PC-9 (cell line): ENCODE measurements at regions of chr2 and their contacts with region 1.

Region 1: DNA sequence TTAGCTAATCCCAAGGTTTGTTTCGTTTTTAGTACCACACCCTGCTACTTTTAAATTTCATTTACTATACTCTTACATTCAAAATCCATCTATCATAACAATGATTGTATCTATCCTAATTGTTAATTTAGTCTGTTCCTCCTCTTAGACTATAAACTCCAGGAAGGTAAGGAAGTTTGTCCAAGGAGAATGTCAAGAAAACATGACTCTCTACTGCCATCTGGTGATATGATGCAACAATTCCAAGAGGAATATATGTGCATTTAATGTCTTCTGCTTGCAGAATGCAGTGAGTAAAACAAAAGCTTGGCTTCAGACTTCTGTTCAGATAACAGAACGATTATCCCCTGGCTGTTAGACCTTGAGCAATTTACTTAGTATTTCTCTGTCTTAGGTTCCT is 1267.1 kb downstream of the LRP1B start:
- DNase-seq: no peak
- H3K4me3 ChIP-seq: no peak overlapping the region
- H3K27ac ChIP-seq: no peak overlapping the region
- H3K4me1 ChIP-seq: no peaks in the 10 kb centered on the region
- H3K27me3 ChIP-seq: no peaks in the 10 kb centered on the region
- CTCF ChIP-seq: peak; percentile 50

Region 2: DNA sequence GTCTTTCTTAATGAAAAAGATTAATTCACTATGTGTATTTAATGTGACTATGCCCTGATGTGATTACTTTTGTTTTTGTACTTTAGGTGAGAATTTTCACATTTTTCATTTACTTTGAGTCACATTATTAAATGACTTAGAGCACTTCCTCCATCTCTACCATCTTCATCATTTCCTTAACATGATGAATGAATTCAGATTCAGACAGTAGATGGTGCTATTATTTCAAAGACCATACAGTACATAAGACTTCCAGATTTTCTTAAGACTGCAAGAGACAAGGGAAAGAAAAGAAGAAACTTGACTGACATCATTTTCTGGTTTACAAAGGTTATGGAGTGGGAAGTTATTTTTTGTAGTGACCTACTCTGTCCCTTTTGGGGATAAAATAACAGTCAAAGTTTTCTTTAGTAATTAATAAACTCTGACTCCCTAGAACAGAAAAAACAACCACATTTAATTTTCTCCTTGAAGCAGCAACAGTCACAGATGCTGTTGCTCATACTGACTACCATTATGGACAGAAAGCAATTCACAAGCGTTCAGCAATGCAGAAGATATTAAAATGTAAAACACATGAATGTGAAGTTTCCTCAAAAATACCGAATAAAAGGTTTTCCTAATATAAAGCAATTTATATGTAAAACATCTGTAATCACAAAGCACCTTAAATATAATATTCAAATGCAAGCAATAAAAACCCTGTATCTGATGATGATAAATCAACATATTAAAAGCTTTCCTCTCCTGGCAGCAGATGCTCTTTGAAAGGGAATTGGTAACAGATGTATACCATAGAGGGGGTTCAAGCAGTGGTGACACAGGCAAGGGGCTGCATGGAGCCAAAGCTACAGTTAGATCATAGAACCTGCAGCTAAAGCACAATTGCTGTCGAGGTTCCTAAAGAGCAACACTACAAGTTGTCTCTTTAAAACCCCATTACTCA is 1072.6 kb before region 1 on chr2:
- CTCF ChIA-PET with region 1: no interaction called
- POLR2A ChIA-PET with region 1: no interaction called
- intact Hi-C with region 1: loop called (anchors 2 kb)
- DNase-seq: peak in 1 of 2 experiments; percentile 40
- H3K4me3 ChIP-seq: no peak overlapping the region
- H3K27ac ChIP-seq: no peak overlapping the region
- H3K4me1 ChIP-seq: no peaks in the 10 kb centered on the region
- H3K27me3 ChIP-seq: no peaks in the 10 kb centered on the region
- CTCF ChIP-seq: peak; percentile 54

Region 3: DNA sequence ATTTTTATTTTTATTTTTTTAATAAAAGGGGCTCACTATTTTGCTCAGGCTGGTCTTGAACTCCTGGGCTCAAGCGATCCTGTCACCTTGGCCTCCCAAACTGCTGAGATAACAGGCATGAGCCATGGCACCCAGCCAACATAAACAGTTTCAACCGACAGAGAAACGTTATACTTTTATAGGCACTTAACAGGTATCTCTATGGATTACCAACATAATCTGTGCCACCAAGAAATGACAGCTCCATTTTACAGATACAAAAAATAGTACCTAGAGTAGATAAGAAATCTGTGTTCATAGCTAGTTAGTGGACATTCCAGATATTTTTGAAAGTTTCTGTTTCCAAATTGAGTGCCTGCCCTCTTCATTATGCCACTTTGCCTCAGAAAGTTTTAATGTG is 49.6 kb before region 1 on chr2:
- CTCF ChIA-PET with region 1: no interaction called
- POLR2A ChIA-PET with region 1: no interaction called
- intact Hi-C with region 1: no loop called
- DNase-seq: no peak
- H3K4me3 ChIP-seq: no peak overlapping the region
- H3K27ac ChIP-seq: no peak overlapping the region
- H3K4me1 ChIP-seq: no peaks in the 10 kb centered on the region
- H3K27me3 ChIP-seq: no peaks in the 10 kb centered on the region
- CTCF ChIP-seq: no peak

Region 4: GRCh38 chr2:140949932-140950331 is 86.2 kb after region 1 on chr2:
- CTCF ChIA-PET with region 1: no interaction called
- POLR2A ChIA-PET with region 1: no interaction called
- intact Hi-C with region 1: no loop called
- DNase-seq: no peak
- H3K4me3 ChIP-seq: no peak overlapping the region
- H3K27ac ChIP-seq: no peak overlapping the region
- H3K4me1 ChIP-seq: no peaks in the 10 kb centered on the region
- H3K27me3 ChIP-seq: no peaks in the 10 kb centered on the region
- CTCF ChIP-seq: no peak

Region 5: DNA sequence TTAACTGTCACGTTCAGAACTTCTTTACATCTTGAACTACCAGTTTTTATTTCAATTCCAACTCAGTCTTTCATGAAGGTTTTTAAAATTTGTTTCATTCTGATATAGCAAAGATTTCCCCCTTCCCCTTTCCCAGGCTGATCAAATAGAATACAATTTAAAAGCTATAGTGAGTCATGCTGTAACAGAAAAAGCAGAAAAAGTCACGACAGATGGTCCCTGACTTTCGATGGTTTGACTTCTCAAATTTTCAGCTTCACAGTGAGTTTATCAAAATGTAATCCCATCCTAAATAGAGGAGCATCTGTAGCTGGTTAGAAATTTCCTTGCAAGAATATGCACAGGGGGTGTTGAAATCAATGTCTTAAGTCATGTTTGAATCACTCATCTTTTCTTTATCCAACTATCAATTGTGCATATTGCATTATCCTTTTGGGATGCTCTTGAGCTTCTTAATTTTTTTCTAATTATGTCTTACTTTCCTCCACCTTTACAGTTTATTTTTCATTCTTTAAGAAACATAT is 766.8 kb after region 1 on chr2:
- CTCF ChIA-PET with region 1: no interaction called
- POLR2A ChIA-PET with region 1: no interaction called
- intact Hi-C with region 1: no loop called
- DNase-seq: no peak
- H3K4me3 ChIP-seq: no peak overlapping the region
- H3K27ac ChIP-seq: no peak overlapping the region
- H3K4me1 ChIP-seq: no peaks in the 10 kb centered on the region
- H3K27me3 ChIP-seq: no peaks in the 10 kb centered on the region
- CTCF ChIP-seq: no peak